Activated CD8-positive, alpha-beta T cell treated with anti-CD3 and anti-CD28 coated beads for 36 hours (primary cell): ENCODE measurements at regions of chr13 and their contacts with region 1.

Region 1: GRCh38 chr13:101144808-101145419 is 271.4 kb downstream of the NALCN start:
- DNase-seq: peak; percentile 28
- ATAC-seq: no peak
- H3K4me3 Mint-ChIP-seq: no peak overlapping the region
- H3K27ac Mint-ChIP-seq: no peak overlapping the region
- H3K4me1 Mint-ChIP-seq: no peaks in the 10 kb centered on the region
- H3K27me3 Mint-ChIP-seq: peaks cover 17% of the 10 kb centered on the region
- CTCF ChIP-seq: peak; percentile 74

Region 2: GRCh38 chr13:101053301-101054093 is 91.4 kb before region 1 on chr13:
- CTCF ChIA-PET with region 1: no interaction called
- POLR2A ChIA-PET with region 1: no interaction called
- intact Hi-C with region 1: no loop called
- DNase-seq: no peak
- ATAC-seq: no peak
- H3K4me3 Mint-ChIP-seq: no peak overlapping the region
- H3K27ac Mint-ChIP-seq: no peak overlapping the region
- H3K4me1 Mint-ChIP-seq: peaks cover 2% of the 10 kb centered on the region
- H3K27me3 Mint-ChIP-seq: peaks cover 7% of the 10 kb centered on the region
- CTCF ChIP-seq: no peak

Region 3: GRCh38 chr13:101127741-101128353 is 17.1 kb before region 1 on chr13:
- CTCF ChIA-PET with region 1: interaction called, 11 read pairs
- POLR2A ChIA-PET with region 1: no interaction called
- intact Hi-C with region 1: no loop called
- DNase-seq: peak; percentile 34
- ATAC-seq: peak; percentile 75
- H3K4me3 Mint-ChIP-seq: no peak overlapping the region
- H3K27ac Mint-ChIP-seq: no peak overlapping the region
- H3K4me1 Mint-ChIP-seq: no peaks in the 10 kb centered on the region
- H3K27me3 Mint-ChIP-seq: peaks cover 2% of the 10 kb centered on the region
- CTCF ChIP-seq: peak; percentile 80

Region 4: GRCh38 chr13:101155920-101156319 is 11.0 kb after region 1 on chr13:
- CTCF ChIA-PET with region 1: interaction called, 23 read pairs
- POLR2A ChIA-PET with region 1: interaction called, 3 read pairs
- intact Hi-C with region 1: no loop called
- DNase-seq: no peak
- ATAC-seq: no peak
- H3K4me3 Mint-ChIP-seq: no peak overlapping the region
- H3K27ac Mint-ChIP-seq: no peak overlapping the region
- H3K4me1 Mint-ChIP-seq: no peaks in the 10 kb centered on the region
- H3K27me3 Mint-ChIP-seq: peaks cover 11% of the 10 kb centered on the region
- CTCF ChIP-seq: no peak

Region 5: DNA sequence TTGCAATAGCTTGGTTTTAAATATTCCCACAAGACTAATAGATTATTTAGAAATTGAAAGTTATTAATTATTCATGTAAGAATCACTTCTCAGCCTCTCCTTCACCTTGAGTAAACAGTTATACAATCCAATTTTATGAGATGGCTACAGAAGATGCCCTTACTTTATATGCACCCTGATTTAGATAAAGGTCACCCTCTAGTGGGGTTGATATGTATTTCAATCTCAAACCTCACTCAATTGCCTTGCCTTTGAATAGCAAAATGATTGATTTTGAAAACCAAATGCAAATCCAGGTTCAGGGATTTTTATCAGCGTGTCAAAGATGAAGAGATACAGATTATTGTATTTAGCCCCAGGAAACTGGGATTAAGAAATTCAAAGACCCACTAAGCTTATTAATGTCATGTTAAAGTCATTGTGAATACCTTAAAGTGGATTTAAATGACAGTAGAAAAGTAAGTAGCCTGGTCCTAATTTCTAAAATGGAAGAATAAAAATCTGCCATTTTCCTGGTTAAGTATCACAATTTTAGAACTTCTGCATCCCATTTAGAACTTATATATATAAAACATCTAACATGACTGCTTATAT is 612.6 kb after region 1 on chr13:
- CTCF ChIA-PET with region 1: interaction called, 19 read pairs
- POLR2A ChIA-PET with region 1: no interaction called
- intact Hi-C with region 1: loop called (anchors 5 kb)
- DNase-seq: no peak
- ATAC-seq: no peak
- H3K4me3 Mint-ChIP-seq: no peak overlapping the region
- H3K27ac Mint-ChIP-seq: no peak overlapping the region
- H3K4me1 Mint-ChIP-seq: no peaks in the 10 kb centered on the region
- H3K27me3 Mint-ChIP-seq: peaks cover 12% of the 10 kb centered on the region
- CTCF ChIP-seq: peak; percentile 64

Region 6: GRCh38 chr13:101763191-101763590 is 618.3 kb after region 1 on chr13:
- CTCF ChIA-PET with region 1: interaction called, 19 read pairs
- POLR2A ChIA-PET with region 1: no interaction called
- intact Hi-C with region 1: loop called (anchors 5 kb)
- DNase-seq: no peak
- ATAC-seq: no peak
- H3K4me3 Mint-ChIP-seq: no peak overlapping the region
- H3K27ac Mint-ChIP-seq: no peak overlapping the region
- H3K4me1 Mint-ChIP-seq: no peaks in the 10 kb centered on the region
- H3K27me3 Mint-ChIP-seq: peaks cover 16% of the 10 kb centered on the region
- CTCF ChIP-seq: no peak

Region 7: DNA sequence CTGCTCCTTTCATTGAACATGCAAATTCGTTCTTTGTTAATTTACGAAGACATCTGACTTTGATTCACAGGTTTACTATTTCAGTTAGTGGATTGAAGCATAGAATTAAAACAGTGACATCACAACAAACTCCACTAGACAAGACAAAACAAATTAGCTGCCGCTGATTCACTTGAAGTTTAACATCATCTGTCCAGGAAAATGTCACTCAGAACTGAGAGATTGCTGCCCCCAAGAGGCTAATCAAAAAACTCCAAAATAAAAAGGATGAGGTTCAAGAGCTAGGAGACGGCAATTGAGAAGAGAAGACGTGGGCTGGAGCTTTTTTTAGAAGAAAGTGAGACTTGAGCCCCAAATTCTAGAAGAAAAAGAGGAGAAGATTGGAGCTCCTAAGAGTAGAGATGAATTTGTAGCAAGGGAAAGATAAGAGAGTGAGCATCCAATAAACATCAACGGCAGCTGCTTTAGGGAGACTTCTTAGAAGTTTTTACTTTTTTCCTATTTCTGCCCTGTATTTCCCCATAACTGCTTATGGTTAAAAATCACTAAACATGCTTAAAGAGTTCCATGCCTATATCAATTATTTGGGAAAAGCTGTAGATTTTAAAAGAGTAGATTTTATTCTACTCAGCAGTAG is 1411.1 kb after region 1 on chr13:
- CTCF ChIA-PET with region 1: interaction called, 15 read pairs
- POLR2A ChIA-PET with region 1: no interaction called
- intact Hi-C with region 1: no loop called
- DNase-seq: peak; percentile 4
- ATAC-seq: peak; percentile 51
- H3K4me3 Mint-ChIP-seq: no peak overlapping the region
- H3K27ac Mint-ChIP-seq: no peak overlapping the region
- H3K4me1 Mint-ChIP-seq: peaks cover 2% of the 10 kb centered on the region
- H3K27me3 Mint-ChIP-seq: peaks cover 2% of the 10 kb centered on the region
- CTCF ChIP-seq: peak; percentile 77